ENCODE measurements at regions of chr10 and their contacts with region 1.

Region 1: GRCh38 chr10:101353692-101354327 is at the start of gene BTRC:
- DNase-seq: peak; percentile 99
- H3K4me3 Mint-ChIP-seq: peak within 1 kb of the TSS; percentile 90
- H3K27ac Mint-ChIP-seq: peak within 1 kb of the TSS; percentile 98
- H3K4me1 Mint-ChIP-seq: peaks cover 24% of the 10 kb centered on the region
- H3K27me3 Mint-ChIP-seq: peaks cover 19% of the 10 kb centered on the region
- total RNA-seq, gene BTRC: 16.2 and 19.0 TPM in 2 replicates

Region 2: GRCh38 chr10:101367569-101368453 is 14.0 kb after region 1 on chr10:
- intact Hi-C with region 1: loop called (anchors 1 kb)
- DNase-seq: peak; percentile 65
- H3K4me3 Mint-ChIP-seq: no peak overlapping the region
- H3K27ac Mint-ChIP-seq: peak overlapping the region; percentile 70
- H3K4me1 Mint-ChIP-seq: peaks cover 12% of the 10 kb centered on the region
- H3K27me3 Mint-ChIP-seq: no peaks in the 10 kb centered on the region

Region 3: DNA sequence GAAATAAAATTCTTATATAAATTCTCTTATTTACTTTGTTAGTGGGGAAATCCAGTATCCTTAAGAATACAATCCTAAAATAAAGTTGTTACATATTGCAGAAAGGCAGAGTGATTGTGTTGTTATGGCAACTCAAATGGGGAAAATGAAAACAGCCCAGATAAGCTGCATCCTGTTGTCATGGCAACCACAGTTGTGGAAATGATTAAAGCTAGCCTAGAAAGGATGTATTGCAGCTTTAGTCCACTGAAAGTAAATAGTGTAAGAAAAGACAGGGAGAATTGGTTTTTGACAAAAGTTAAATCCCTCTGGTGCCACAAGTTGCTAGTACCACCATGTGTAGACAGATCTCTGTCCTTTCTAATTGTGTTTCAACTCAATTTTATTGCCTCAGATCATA is 43.3 kb after region 1 on chr10:
- intact Hi-C with region 1: no loop called
- DNase-seq: peak; percentile 80
- H3K4me3 Mint-ChIP-seq: no peak overlapping the region
- H3K27ac Mint-ChIP-seq: no peak overlapping the region
- H3K4me1 Mint-ChIP-seq: peaks cover 5% of the 10 kb centered on the region
- H3K27me3 Mint-ChIP-seq: no peaks in the 10 kb centered on the region

Region 4: GRCh38 chr10:101495324-101495925 is 141.6 kb after region 1 on chr10:
- intact Hi-C with region 1: no loop called
- DNase-seq: no peak
- H3K4me3 Mint-ChIP-seq: no peak overlapping the region
- H3K27ac Mint-ChIP-seq: no peak overlapping the region
- H3K4me1 Mint-ChIP-seq: peaks cover 2% of the 10 kb centered on the region
- H3K27me3 Mint-ChIP-seq: no peaks in the 10 kb centered on the region

Region 5: GRCh38 chr10:101587725-101588653 is 234.2 kb after region 1 on chr10 and contains the starts of genes DPCD and POLL:
- intact Hi-C with region 1: loop called (anchors 1 kb)
- DNase-seq: peak; percentile 97
- H3K4me3 Mint-ChIP-seq: peak within 1 kb of the TSS; percentile 95
- H3K27ac Mint-ChIP-seq: peak within 1 kb of the TSS; percentile 86
- H3K4me1 Mint-ChIP-seq: peaks cover 18% of the 10 kb centered on the region
- H3K27me3 Mint-ChIP-seq: no peaks in the 10 kb centered on the region
- total RNA-seq, gene DPCD: 5.4 and 6.4 TPM in 2 replicates
- total RNA-seq, gene POLL: 32.2 and 33.8 TPM in 2 replicates

Region 6: GRCh38 chr10:102055647-102056419 is 702.0 kb after region 1 on chr10 and contains the start of gene ARMH3:
- intact Hi-C with region 1: loop called (anchors 5 kb)
- DNase-seq: peak; percentile 97
- H3K4me3 Mint-ChIP-seq: peak within 1 kb of the TSS; percentile 98
- H3K27ac Mint-ChIP-seq: peak within 1 kb of the TSS; percentile 95
- H3K4me1 Mint-ChIP-seq: peaks cover 28% of the 10 kb centered on the region
- H3K27me3 Mint-ChIP-seq: no peaks in the 10 kb centered on the region
- total RNA-seq, gene ARMH3: 20.9 and 23.2 TPM in 2 replicates